ENCODE measurements at regions of chrX and their contacts with region 1.

Region 1: DNA sequence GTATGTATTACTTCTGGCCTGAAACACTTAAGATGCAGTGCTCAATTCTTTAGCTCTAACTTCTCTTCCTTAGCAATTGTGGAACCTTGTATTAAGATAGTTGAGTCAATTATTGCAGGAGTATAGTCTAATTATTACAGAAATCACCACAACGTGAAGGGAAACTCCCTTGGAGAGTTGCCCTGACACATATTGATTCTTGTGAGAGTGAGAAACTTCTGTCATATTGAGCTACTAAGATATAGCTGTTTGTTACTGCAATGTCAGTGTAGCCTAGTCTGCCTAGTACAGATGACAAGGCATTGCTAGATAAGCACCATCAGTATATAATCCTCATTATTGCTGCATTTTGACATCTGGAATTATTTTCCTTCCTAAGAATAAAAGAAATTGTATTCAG is 82.7 kb upstream of the TEX13C start:
- DNase-seq: no peak
- ATAC-seq: no peak
- H3K4me3 ChIP-seq: no peak overlapping the region
- H3K27ac ChIP-seq: no peak overlapping the region
- H3K4me1 ChIP-seq: no peaks in the 10 kb centered on the region
- H3K27me3 ChIP-seq: no peaks in the 10 kb centered on the region
- CTCF ChIP-seq: no peak
- EP300 ChIP-seq: no peak
- POLR2A ChIP-seq: no peak
- RAD21 ChIP-seq: no peak

Region 2: GRCh38 chrX:125205133-125205917 is 31.6 kb before region 1 on chrX:
- CTCF ChIA-PET with region 1: no interaction called
- POLR2A ChIA-PET with region 1: interaction called, 10 read pairs
- in situ Hi-C with region 1: no loop called
- intact Hi-C with region 1: no loop called
- DNase-seq: peak in 2 of 4 experiments; percentile 10
- ATAC-seq: peak; percentile 64
- H3K4me3 ChIP-seq: no peak overlapping the region; the same call in 1 of the 2 replicates
- H3K27ac ChIP-seq: no peak overlapping the region
- H3K4me1 ChIP-seq: peaks cover 0 to 24% of the 10 kb centered on the region in 2 experiments; a peak in 3 of 5 replicates
- H3K27me3 ChIP-seq: peaks cover 2 to 13% of the 10 kb centered on the region in 2 experiments; a peak in 2 of 5 replicates
- CTCF ChIP-seq: no peak
- EP300 ChIP-seq: no peak
- POLR2A ChIP-seq: no peak
- RAD21 ChIP-seq: no peak

Region 3: DNA sequence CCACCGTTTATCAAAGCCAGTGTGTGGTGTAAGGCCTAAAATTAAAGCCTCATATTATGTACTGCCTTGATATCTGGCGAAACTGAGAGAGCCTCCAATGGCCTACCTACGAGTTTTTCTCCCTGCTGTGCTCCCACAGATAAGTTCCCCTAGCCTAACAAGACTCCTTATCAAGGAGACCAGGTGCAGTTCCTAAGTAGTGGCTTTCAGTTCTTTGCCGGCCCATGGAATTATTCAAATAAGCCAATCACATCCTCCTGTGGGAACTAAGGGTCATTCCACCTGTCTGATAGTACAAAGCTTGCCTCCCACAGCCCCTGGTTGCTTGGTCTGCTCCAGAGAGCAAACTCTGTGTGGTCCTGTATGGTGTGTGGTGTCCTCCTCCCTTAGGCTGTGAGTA is 17.1 kb before region 1 on chrX:
- CTCF ChIA-PET with region 1: no interaction called
- POLR2A ChIA-PET with region 1: no interaction called
- in situ Hi-C with region 1: no loop called
- intact Hi-C with region 1: no loop called
- DNase-seq: peak; percentile 28 to 75 (median 53)
- ATAC-seq: peak; percentile 92
- H3K4me3 ChIP-seq: no peak overlapping the region
- H3K27ac ChIP-seq: no peak overlapping the region; the same call in 2 of the 3 replicates
- H3K4me1 ChIP-seq: peaks cover 0 to 5% of the 10 kb centered on the region in 2 experiments; a peak in 3 of 5 replicates
- H3K27me3 ChIP-seq: no peaks in the 10 kb centered on the region
- CTCF ChIP-seq: no peak
- EP300 ChIP-seq: peak; percentile 67
- POLR2A ChIP-seq: no peak
- RAD21 ChIP-seq: no peak

Region 4: DNA sequence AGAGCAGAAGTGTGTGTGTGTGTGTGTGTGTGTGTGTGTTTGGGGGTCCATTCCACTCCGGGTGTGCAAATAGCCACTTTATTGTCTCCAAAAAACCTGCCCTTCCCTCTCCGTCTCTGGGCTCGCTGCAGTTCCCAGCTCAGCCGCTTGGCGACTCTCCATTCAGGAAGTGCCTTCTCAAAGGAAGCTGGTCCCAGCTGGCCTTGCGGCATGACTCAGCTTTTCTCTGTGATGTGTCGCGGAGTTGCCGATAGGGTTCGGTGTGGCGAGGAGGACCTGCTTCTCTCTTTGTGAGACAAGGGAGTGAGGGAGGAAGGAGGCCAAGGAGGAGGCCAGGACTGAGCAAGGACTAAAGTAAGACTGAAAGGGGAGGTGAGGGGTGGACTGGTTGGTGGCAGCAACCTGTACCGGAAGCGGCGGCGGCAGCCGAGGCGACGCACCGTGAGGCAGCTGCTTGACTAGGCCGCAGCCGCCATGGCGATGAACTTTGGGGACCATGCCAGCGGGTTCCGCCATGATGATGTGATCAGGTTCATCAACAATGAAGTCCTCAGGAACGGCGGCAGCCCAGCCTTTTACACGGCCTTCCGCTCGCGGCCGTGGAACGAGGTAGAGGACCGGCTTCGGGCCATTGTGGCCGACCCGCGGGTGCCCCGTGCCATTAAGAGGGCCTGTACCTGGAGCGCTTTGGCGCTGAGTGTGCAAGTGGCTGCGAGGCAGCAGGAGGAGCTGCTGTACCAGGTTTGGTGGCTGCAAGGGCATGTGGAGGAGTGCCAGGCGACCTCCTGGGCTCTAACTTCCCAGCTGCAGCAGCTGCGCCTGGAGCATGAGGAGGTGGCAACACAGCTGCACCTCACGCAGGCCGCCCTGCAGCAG is 82.9 kb after region 1 on chrX and contains the start of gene TEX13C:
- CTCF ChIA-PET with region 1: no interaction called
- POLR2A ChIA-PET with region 1: no interaction called
- in situ Hi-C with region 1: no loop called
- intact Hi-C with region 1: no loop called
- DNase-seq: no peak
- ATAC-seq: no peak
- H3K4me3 ChIP-seq: no peak within 1 kb of the TSS
- H3K27ac ChIP-seq: no peak within 1 kb of the TSS
- H3K4me1 ChIP-seq: no peaks in the 10 kb centered on the region; a peak in 1 of 5 replicates
- H3K27me3 ChIP-seq: no peaks in the 10 kb centered on the region
- CTCF ChIP-seq: no peak
- EP300 ChIP-seq: no peak
- POLR2A ChIP-seq: no peak
- RAD21 ChIP-seq: no peak
- polyA plus RNA-seq, gene TEX13C: not detected